Dendritic cell treated with granulocyte-macrophage colony-stimulating factor and Interleukin-4, amounts not matched to agents 40 ng/mL and 50 ng/mL, for 4 days (primary cell): ENCODE measurements at regions of chr7 and their contacts with region 1.

Region 1: DNA sequence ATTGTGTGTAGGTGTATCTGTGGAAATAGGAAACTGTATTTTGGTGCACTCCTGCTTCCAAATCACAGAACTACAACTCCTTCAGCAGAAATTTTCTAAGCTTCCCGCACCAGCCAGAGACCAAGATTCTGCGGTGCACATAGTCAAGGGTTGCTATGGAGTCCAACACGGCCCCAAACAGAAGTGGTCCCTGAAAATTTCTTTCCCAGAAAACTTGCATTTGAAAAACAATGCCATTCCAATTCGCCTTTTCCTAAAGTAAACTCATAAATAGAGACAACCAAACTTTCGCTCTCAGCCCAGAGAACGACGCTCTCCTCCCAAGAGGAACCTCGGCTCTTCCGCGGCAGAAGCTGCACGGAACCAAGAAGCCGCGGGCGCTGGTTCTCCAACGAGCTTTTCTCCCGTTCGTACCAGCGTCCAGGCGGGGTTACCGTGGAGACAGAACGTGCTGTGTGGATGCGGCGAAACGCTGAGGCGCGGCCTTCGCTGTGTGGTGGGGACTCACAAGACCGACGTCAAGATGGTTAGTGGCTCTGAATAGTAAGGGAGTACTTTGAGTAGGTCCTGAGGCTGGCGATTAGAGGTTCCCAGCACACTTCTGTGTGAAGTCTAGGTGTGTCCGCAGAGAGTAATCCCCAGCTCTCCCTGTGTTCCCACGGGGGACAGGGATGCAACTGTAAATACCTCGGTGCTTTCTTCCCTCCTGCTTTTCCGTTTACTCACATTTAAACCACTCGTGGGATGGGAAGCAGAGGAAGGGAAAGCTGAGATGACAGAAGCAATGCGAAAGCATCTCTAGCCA is 24.0 kb upstream of the ZC3HAV1 start:
- H3K4me3 Mint-ChIP-seq: peak overlapping the region; percentile 77
- H3K27ac Mint-ChIP-seq: peak overlapping the region; percentile 90
- H3K4me1 Mint-ChIP-seq: peaks cover 37% of the 10 kb centered on the region
- H3K27me3 Mint-ChIP-seq: no peaks in the 10 kb centered on the region

Region 2: GRCh38 chr7:138645290-138645689 is 488.2 kb before region 1 on chr7:
- intact Hi-C with region 1: no loop called
- H3K4me3 Mint-ChIP-seq: no peak overlapping the region
- H3K27ac Mint-ChIP-seq: no peak overlapping the region
- H3K4me1 Mint-ChIP-seq: no peaks in the 10 kb centered on the region
- H3K27me3 Mint-ChIP-seq: no peaks in the 10 kb centered on the region

Region 3: GRCh38 chr7:139109188-139109982 is 24.2 kb before region 1 on chr7 and contains the start of gene ZC3HAV1:
- intact Hi-C with region 1: loop called (anchors 1 kb)
- H3K4me3 Mint-ChIP-seq: peak within 1 kb of the TSS; percentile 90
- H3K27ac Mint-ChIP-seq: peak within 1 kb of the TSS; percentile 89
- H3K4me1 Mint-ChIP-seq: peaks cover 19% of the 10 kb centered on the region
- H3K27me3 Mint-ChIP-seq: no peaks in the 10 kb centered on the region

Region 4: GRCh38 chr7:139118805-139119485 is 14.6 kb before region 1 on chr7:
- intact Hi-C with region 1: loop called (anchors 1 kb)
- H3K4me3 Mint-ChIP-seq: peak overlapping the region; percentile 57
- H3K27ac Mint-ChIP-seq: peak overlapping the region; percentile 86
- H3K4me1 Mint-ChIP-seq: peaks cover 28% of the 10 kb centered on the region
- H3K27me3 Mint-ChIP-seq: no peaks in the 10 kb centered on the region

Region 5: DNA sequence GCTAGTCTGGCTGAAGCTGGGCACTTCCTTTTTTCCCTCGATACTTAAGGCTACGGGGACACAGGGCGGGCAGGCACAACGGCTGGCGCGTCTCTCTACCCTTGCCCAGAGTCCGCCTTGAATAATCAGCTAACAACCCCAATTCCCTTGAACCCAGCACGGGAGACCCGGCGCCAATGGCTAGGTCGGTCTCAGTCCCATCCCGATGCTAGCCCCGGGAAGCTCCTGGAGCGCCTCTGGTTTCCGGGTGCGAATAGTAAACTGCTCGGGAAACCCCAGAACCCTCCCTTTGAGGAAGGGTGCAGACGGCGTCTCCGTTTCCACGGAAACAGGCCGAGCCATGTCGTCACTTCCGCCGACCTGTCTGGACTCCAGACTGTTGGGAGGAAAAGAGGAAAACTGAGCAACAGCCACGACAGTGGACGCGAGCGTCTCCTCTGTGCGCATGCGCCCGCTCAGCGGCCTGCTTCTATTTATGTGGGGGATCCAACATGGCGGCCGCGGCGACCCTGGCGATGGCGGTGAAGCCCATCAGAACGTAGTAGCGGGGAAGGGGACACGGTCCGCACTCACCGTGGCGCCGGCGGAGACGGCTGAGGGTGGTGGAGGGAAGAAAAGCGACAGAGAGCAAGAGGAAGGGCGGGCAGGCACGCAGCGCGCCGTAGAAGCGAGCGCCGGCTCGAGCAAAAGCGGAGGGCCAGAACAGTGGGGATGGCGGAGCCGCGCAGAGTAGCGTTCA is 97.4 kb after region 1 on chr7 and contains the start of gene UBN2:
- intact Hi-C with region 1: loop called (anchors 2 kb)
- H3K4me3 Mint-ChIP-seq: peak within 1 kb of the TSS; percentile 100
- H3K27ac Mint-ChIP-seq: peak within 1 kb of the TSS; percentile 95
- H3K4me1 Mint-ChIP-seq: peaks cover 17% of the 10 kb centered on the region
- H3K27me3 Mint-ChIP-seq: no peaks in the 10 kb centered on the region